ENCODE measurements at regions of chr11 and their contacts with region 1.

Region 1: DNA sequence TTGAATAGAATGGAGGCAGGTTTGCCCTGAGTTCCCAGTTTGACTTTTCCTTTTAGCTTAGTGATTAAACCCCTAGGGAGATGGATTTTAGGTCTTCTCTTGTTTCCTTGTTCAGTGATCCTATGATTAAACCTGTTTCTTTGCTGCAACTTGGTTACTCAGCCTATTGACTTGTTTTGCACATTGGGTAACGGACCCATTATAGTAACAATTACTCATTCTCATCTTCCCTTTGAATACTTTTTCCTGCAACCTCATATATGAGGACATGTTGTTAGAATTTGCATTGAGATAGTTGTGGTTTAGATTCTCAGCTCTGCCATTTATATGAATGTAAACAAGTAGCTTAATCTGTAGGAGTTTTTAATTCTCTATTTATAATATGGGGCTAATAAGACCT is 489.2 kb upstream of the CNTN5 start:
- DNase-seq: no peak
- H3K4me3 ChIP-seq: no peak overlapping the region
- H3K27ac ChIP-seq: no peak overlapping the region
- H3K4me1 ChIP-seq: no peaks in the 10 kb centered on the region
- H3K27me3 ChIP-seq: no peaks in the 10 kb centered on the region
- CTCF ChIP-seq: no peak
- POLR2A ChIP-seq: no peak

Region 2: GRCh38 chr11:96990914-96991313 is 1540.7 kb before region 1 on chr11:
- intact Hi-C with region 1: loop called (anchors 10 kb)
- DNase-seq: no peak
- H3K4me3 ChIP-seq: no peak overlapping the region
- H3K27ac ChIP-seq: no peak overlapping the region
- H3K4me1 ChIP-seq: no peaks in the 10 kb centered on the region
- H3K27me3 ChIP-seq: no peaks in the 10 kb centered on the region
- CTCF ChIP-seq: no peak
- POLR2A ChIP-seq: no peak

Region 3: DNA sequence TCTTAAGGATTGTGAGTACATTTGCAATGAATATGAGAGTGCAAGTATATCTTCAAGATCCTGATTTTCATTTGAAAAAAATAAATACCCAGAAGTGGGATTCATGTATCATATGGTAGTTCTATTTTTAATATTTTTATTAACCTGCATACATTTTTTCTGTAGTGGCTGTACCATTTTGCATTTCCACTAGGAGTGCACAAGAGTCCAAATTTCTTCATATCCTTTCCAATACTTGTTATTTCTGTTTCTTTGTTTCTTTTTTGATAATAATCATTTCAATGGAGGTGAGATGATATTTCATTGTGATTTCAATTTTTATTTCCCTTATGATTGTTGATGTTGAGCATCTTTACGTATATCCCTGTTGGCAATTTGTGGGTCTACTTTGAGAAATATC is 270.6 kb before region 1 on chr11:
- intact Hi-C with region 1: no loop called
- DNase-seq: no peak
- H3K4me3 ChIP-seq: no peak overlapping the region
- H3K27ac ChIP-seq: no peak overlapping the region
- H3K4me1 ChIP-seq: no peaks in the 10 kb centered on the region
- H3K27me3 ChIP-seq: no peaks in the 10 kb centered on the region
- CTCF ChIP-seq: no peak
- POLR2A ChIP-seq: no peak

Region 4: DNA sequence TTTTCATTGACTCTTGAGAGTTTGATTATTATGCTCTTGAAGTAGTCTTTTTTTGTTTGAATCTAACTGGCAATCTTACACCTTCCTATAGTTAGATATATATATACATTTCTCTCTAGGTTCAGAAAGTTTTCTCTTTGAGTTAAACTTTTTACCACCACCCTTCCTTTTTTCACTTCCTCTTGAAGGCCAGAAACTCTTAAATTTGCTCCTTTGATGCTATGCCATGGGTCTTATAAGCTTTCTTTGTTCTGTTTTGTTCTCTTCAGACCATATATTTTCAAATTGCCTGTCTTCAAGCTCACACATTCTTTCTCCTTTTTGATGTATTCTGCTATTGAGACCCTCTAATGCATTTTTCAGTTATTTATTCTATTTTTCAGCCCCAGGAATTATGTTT is 24.4 kb before region 1 on chr11:
- intact Hi-C with region 1: loop called (anchors 2 kb)
- DNase-seq: no peak
- H3K4me3 ChIP-seq: no peak overlapping the region
- H3K27ac ChIP-seq: no peak overlapping the region
- H3K4me1 ChIP-seq: no peaks in the 10 kb centered on the region
- H3K27me3 ChIP-seq: no peaks in the 10 kb centered on the region
- CTCF ChIP-seq: no peak
- POLR2A ChIP-seq: no peak

Measured in breast epithelium (tissue), 4 donors.